Dorsolateral prefrontal cortex (tissue), 120 donors: ENCODE measurements at regions of chr16 and their contacts with region 1.

Region 1: DNA sequence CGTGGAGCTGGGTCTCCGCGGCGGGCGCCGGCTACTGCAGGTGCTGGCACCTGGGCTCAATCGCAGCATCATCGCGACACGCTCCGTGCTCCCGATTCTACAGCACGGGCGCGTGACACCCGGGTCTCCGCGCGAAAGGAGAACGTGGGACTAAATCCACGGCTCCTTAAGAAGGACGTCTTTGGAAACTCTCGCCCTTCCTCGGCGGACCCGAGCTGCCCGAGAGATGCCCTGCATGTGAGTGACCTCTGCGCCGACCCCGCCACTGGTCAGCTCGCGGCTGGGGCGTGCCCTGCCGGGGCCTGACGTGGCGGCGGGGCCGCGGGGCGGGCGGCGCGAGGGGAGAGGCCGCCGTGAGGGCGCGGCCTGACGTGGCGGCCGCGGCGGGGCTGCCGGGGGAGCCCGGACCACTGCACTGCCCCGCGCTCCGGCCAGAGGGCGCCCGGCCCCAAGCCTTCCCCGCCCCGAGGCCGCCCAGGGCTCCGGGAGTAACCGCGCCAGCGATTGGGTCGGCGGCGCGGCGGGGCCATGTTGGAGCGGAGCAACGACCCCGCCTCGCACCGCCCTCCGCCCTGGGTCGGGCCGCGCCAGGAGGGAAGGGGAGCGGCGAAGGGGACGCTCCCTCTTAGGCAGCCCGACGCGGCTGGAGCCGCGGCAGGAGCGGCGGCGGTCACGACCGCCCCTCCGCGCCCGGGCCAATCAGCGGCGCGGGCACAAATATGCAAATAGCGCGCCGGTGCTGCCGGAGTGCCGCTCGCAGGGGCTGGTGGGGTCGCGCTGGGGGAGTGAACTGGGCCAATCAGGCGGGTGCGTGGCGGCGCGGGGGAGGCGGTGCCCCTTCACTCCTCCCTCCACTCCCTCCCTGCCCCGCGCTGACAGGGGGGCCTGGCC is 75.6 kb downstream of the CHD9 start:
- DNase-seq: peak; percentile 88 to 96 (median 94)
- H3K4me3 ChIP-seq: peak overlapping the region; percentile 57 to 93 (median 82)
- H3K27ac ChIP-seq: peak overlapping the region; percentile 77 to 98 (median 94)
- H3K27me3 ChIP-seq: no peaks in the 10 kb centered on the region
- CTCF ChIP-seq: peak; percentile 13 to 88 (median 60)

Region 2: GRCh38 chr16:53091466-53092211 is 38.8 kb before region 1 on chr16:
- intact Hi-C with region 1: loop called in 1 of 2 experiments (anchors 1 kb)
- DNase-seq: peak; percentile 26 to 93 (median 84)
- H3K4me3 ChIP-seq: peak overlapping the region in 54 of 59 donors; percentile 1 to 59 (median 30)
- H3K27ac ChIP-seq: peak overlapping the region; percentile 31 to 94 (median 86)
- H3K27me3 ChIP-seq: no peaks in the 10 kb centered on the region
- CTCF ChIP-seq: peak in 12 of 56 donors; percentile 5 to 33 (median 11)

Region 3: DNA sequence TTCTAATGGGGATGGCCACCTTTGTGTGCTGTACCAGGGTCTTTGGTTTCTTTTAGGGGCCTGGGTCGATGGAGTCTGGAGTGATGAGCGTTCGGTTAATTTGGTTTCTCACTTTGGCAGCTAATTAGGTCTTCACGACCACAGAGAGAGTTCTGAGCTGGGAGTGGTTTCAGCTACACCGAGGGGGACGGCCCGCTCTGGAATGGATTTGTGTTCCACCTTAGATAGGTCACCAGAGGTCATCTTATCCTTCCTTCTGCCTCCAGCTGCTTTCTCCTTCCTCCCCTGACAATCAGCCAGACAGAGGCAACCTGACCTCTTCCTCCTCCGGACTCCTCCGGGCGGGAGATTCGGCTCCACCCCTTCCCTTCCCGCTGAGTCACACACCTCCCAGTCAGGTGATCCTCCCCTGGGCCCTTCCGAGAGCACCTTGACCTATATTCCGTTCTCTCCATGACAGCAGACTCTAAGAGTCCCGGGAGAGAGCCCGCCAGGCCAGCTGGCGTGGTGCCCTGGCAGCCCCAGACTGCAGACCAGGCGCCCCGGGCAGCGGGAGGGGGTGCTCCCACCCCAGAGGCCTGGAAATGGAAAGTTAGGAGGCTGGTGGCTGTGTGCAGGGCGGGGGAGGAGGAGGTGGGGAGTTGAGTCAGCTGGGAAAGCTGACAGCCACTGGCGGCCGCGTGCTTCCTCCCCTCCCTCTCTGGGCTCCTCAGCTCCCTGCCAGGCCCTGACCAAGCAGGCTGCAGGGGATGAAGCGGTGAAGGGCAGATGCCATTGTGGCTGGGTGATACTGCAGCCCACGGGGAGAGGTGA is 30.9 kb before region 1 on chr16:
- intact Hi-C with region 1: loop called (anchors 2 kb)
- DNase-seq: peak; percentile 70 to 94 (median 89)
- H3K4me3 ChIP-seq: peak overlapping the region; percentile 22 to 71 (median 51)
- H3K27ac ChIP-seq: peak overlapping the region; percentile 68 to 98 (median 93)
- H3K27me3 ChIP-seq: no peaks in the 10 kb centered on the region
- CTCF ChIP-seq: peak in 16 of 56 donors; percentile 0 to 38 (median 20)

Region 4: GRCh38 chr16:53207810-53208752 is 77.7 kb after region 1 on chr16:
- intact Hi-C with region 1: loop called (anchors 1 to 2 kb)
- DNase-seq: peak in 7 of 10 donors; percentile 24 to 71 (median 53)
- H3K4me3 ChIP-seq: peak overlapping the region; percentile 42 to 81 (median 65)
- H3K27ac ChIP-seq: peak overlapping the region; percentile 67 to 97 (median 91)
- H3K27me3 ChIP-seq: no peaks in the 10 kb centered on the region
- CTCF ChIP-seq: peak in 55 of 56 donors; percentile 31 to 73 (median 58)

Region 5: GRCh38 chr16:53503270-53503923 is 373.0 kb after region 1 on chr16:
- intact Hi-C with region 1: loop called in 1 of 2 experiments (anchors 5 kb)
- DNase-seq: peak; percentile 100
- H3K4me3 ChIP-seq: peak overlapping the region; percentile 71 to 98 (median 91)
- H3K27ac ChIP-seq: peak overlapping the region; percentile 86 to 100 (median 98)
- H3K27me3 ChIP-seq: no peaks in the 10 kb centered on the region
- CTCF ChIP-seq: peak in 13 of 56 donors; percentile 3 to 35 (median 14)